GM10248 (cell line): ENCODE measurements at regions of chr17 and their contacts with region 1.

Region 1: GRCh38 chr17:35170968-35171771 is 23.0 kb downstream of the SLC35G3 start:
- DNase-seq: peak; percentile 53
- CTCF ChIP-seq: peak; percentile 11

Region 2: DNA sequence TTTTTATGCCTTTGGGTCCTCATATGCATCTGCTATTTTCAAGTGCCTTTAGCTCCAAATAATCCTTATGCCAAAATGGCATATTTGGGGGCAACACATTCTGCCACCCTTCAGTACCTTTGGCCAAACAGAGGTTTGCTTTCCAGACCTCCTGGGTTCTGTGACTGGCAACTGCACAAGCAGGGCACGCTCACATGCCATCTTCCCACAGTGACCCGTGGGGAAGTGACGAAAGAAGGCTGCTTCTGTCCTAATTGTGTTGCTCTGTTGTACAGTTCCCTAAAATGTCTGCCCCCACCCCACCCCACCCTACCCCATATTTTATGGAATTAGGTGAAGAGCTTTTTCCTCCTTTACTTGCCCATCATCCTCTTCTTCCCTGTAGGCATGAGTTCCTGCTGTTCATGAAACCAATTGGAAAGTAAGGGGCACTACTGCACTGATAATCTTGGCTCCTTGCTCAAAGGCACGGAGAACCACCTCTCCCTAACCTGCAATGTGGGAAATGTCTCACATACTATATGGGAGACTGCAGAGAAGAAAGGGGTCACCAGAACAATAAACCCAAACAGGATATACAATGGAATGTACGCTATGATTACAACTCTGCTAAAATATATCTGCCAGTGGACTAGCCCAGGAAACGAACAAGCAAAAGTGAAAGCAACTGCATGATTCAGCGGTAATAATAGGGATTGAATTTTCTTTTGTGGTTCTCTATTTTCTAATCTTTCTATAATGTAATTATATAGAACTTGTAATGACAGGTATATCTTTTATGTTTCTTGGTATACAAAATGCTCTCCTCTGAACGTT is 369.6 kb after region 1 on chr17:
- CTCF ChIA-PET with region 1: interaction called, 19 read pairs
- POLR2A ChIA-PET with region 1: no interaction called
- DNase-seq: no peak
- CTCF ChIP-seq: no peak